ENCODE measurements at regions of chr9 and their contacts with region 1.

Region 1: DNA sequence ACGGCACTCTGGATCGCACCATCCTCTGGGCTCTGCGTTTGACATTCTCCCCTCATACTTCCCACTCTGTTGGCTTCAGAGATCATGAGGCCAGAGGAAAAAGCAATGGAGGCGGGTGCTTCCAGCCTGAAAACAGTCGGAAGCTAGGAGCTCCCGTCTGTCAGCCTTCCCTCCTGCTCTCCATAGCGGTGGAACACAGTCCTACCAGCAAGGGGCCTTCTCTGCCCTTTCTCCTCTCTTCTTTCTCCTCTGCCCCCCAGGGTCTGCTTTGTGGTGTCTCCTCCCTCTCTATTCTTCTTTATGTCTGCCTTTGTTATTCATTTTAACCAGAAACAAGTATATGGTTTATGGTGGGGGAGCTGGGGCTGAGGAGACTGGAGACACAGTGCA is 152.5 kb upstream of the NFIB start:
- H3K4me3 ChIP-seq: no peak overlapping the region
- H3K27ac ChIP-seq: no peak overlapping the region
- H3K4me1 ChIP-seq: no peaks in the 10 kb centered on the region
- CTCF ChIP-seq: no peak

Region 2: GRCh38 chr9:14652729-14653377 is 186.4 kb after region 1 on chr9:
- CTCF ChIA-PET with region 1: interaction called, 14 read pairs
- POLR2A ChIA-PET with region 1: no interaction called
- H3K4me3 ChIP-seq: no peak overlapping the region
- H3K27ac ChIP-seq: no peak overlapping the region
- H3K4me1 ChIP-seq: no peaks in the 10 kb centered on the region
- CTCF ChIP-seq: no peak

Region 3: DNA sequence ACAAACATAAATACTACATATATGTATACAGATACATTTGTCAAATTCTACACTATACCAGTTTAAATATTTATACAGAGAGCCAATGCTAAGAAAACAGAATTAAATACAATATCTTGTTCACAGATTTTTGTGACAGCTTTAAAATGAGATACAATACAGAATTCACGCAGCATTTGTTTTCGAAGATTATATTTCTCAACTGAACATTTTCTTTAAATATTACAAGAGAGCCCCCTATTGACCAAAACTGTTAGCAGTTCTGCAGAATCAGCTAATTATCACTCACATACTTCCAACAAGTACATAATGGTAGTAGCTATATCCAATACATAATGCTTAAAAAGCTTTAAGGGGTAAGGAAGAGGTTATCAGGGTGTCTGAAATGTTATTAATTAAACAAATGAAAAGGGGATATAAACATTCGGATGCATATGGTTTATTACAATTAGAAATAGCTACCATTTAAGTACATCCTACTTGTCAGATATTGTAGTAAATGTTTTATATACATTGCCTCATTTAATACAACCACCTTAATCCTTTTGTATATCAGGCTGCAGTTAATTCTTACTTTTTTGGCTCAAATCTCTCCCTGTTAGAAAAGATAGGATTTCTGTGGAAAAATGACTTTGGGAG is 195.1 kb after region 1 on chr9:
- CTCF ChIA-PET with region 1: interaction called, 14 read pairs
- POLR2A ChIA-PET with region 1: no interaction called
- H3K4me3 ChIP-seq: no peak overlapping the region
- H3K27ac ChIP-seq: no peak overlapping the region
- H3K4me1 ChIP-seq: no peaks in the 10 kb centered on the region
- CTCF ChIP-seq: no peak

Measured in HEK293 (cell line).